HEK293T (cell line): ENCODE measurements at regions of chr1 and their contacts with region 1.

Region 1: GRCh38 chr1:44217809-44218410 is 4.6 kb downstream of the DMAP1 start:
- DNase-seq: peak; percentile 73

Region 2: DNA sequence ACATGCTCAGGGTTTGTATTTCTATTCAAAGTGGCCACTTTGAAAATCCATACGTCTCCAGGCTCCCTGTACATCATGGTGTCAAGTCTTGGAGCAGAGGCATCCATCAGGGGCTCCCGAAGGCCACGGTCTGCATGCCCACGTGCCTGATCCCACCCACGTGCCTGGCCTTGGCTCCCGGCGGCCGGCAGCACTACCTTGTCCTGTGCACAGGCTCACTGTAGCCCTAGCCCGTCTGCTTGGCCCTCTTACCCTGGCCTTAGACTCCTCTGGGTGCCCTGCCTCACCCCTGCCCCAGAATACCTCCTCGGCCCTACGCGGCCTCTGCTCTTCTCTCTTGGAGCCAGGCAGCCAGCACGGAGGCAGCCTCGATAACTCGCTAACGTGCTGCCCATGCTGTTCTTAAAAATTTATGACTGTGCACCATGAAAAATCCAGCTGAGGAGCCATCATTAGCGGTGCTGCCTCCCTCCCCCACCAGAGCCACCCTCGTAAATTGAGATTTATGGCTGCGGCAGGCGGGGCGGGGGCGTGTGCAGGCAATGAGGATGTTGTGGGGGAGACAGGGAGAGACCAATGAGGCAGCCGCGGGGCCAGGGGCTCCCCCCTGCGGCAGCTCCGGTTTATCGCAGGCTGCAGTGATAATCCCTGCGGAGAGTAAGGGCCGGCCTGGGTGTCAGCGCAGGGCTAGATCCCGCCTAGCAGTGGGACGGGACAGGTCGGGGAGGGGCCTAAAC is 20.0 kb after region 1 on chr1:
- CTCF ChIA-PET with region 1: interaction called, 16 read pairs
- POLR2A ChIA-PET with region 1: interaction called, 6 read pairs
- DNase-seq: peak; percentile 97

Region 3: GRCh38 chr1:44318097-44319088 is 100.5 kb after region 1 on chr1:
- CTCF ChIA-PET with region 1: interaction called, 10 read pairs
- POLR2A ChIA-PET with region 1: no interaction called
- DNase-seq: peak; percentile 74

Region 4: DNA sequence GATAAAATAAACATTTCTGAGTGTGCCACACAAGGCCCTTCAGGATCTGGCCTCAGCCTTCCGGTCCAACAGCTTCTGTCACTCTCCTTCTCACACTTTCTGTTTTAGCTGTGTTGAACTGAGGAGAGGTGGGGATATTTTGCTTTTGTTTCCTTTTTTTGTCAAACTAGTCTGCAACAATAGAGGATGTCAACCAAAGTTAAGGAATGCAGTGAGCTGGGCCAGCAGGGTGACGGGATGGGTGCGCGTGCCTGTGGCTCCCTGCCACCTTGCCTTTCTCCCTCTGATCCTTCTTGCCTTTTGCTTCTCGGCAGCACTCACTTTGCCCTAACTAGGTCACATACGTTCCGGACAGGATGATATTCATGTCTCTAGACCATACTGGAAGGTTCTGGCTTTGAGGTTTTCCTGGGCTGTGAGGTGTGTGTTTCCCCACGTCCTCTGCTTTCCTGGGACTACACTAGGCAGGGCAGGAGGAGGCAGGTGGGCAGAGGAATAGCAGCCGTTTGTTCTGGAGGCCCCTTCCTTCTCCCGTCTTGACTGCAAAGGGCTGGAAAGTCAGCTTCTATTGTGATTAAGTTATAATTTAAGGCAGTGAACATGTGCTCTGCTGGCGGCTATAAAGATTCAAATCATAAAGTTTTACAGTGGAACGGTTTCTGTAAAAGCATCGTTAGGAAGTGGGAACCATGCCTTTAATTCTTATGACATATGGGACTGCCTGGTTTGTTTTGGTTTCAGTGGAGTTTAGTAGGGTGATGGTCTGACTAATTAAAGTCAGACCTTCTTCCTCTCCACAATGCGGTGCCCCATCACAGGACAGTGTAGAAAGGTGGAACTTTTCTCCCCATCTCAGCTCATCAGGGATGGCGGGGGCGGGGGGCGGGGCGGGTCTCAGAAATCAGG is 255.0 kb after region 1 on chr1:
- CTCF ChIA-PET with region 1: no interaction called
- POLR2A ChIA-PET with region 1: no interaction called
- DNase-seq: no peak